A549 (cell line): ENCODE measurements at regions of chr2 and their contacts with region 1.

Region 1: GRCh38 chr2:231612179-231613053 is 19.8 kb downstream of the TEX44 start:
- DNase-seq: peak; percentile 92 to 95
- ATAC-seq: peak; percentile 69 to 84
- H3K4me3 ChIP-seq: peak overlapping the region; percentile 11; the same call in 1 of the 3 replicates
- H3K27ac ChIP-seq: peak overlapping the region; percentile 90 to 95
- H3K4me1 ChIP-seq: peaks cover 35% of the 10 kb centered on the region
- CTCF ChIP-seq: peak; percentile 95
- EP300 ChIP-seq: no peak
- POLR2A ChIP-seq: no peak
- RAD21 ChIP-seq: peak; percentile 94 to 99

Region 2: GRCh38 chr2:231590619-231591018 is 21.8 kb before region 1 on chr2:
- CTCF ChIA-PET with region 1: interaction called, 13 read pairs
- POLR2A ChIA-PET with region 1: no interaction called
- DNase-seq: no peak
- ATAC-seq: 0 out of 6 replicates have a peak, but pooled peaks of 1 of the 2 experiments have one; percentile 36
- H3K4me3 ChIP-seq: no peak overlapping the region
- H3K27ac ChIP-seq: no peak overlapping the region
- H3K4me1 ChIP-seq: no peaks in the 10 kb centered on the region
- CTCF ChIP-seq: no peak
- EP300 ChIP-seq: no peak
- POLR2A ChIP-seq: no peak
- RAD21 ChIP-seq: no peak

Region 3: DNA sequence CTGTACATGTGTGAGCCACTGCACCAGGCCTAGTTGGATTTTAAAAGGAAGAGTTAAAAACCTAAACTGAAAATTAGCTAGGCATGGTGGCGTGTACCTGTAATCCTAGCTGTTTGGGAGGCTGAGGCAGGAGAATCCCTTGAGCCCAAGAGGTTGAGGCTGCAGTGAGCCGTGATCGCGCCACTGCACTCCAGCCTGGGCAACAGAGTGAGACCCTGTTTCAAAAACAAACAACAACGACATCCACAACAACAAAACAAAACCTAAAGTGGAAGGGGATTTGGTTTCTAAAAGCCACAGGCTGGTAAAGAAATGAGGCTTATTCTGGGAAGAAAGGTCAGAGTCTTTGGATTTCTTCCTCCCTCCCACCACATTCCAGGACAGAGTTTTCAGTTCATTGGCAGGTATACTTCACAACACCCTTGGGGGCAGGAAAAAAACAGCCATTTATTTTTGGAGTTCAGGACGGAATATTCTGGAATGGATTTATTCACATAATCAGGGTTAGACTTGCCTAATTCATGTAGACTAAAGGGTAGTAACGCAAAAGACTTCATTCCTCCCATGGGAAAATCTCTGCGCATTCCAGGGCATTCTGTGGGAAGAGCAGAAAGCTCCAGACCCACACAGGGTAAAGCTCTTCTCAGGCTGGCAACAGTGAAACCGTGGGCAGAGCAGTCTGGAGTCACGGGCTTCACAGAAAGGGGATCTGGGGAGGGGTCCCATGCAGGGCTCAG is 15.1 kb after region 1 on chr2:
- CTCF ChIA-PET with region 1: interaction called, 47 read pairs
- POLR2A ChIA-PET with region 1: interaction called, 6 read pairs
- DNase-seq: no peak
- ATAC-seq: no peak
- H3K4me3 ChIP-seq: no peak overlapping the region
- H3K27ac ChIP-seq: 0 out of 6 replicates have a peak overlapping the region, but pooled peaks of 1 of the 2 experiments have one; percentile 18
- H3K4me1 ChIP-seq: peaks cover 9% of the 10 kb centered on the region
- CTCF ChIP-seq: no peak
- EP300 ChIP-seq: no peak
- POLR2A ChIP-seq: no peak
- RAD21 ChIP-seq: no peak

Region 4: GRCh38 chr2:231662028-231662810 is 49.8 kb after region 1 on chr2:
- CTCF ChIA-PET with region 1: interaction called, 4,158 read pairs
- POLR2A ChIA-PET with region 1: interaction called, 25 read pairs
- DNase-seq: peak; percentile 69 to 99
- ATAC-seq: peak; percentile 48 to 72
- H3K4me3 ChIP-seq: peak overlapping the region; percentile 40
- H3K27ac ChIP-seq: peak overlapping the region; percentile 88 to 100
- H3K4me1 ChIP-seq: peaks cover 20% of the 10 kb centered on the region
- CTCF ChIP-seq: no peak; the same call in 2 of the 3 replicates
- EP300 ChIP-seq: no peak
- POLR2A ChIP-seq: peak; percentile 51
- RAD21 ChIP-seq: 0 out of 5 replicates have a peak, but pooled peaks of 1 of the 2 experiments have one; percentile 34

Region 5: GRCh38 chr2:231706731-231707624 is 94.6 kb after region 1 on chr2:
- CTCF ChIA-PET with region 1: interaction called, 4,158 read pairs
- POLR2A ChIA-PET with region 1: interaction called, 41 read pairs
- DNase-seq: peak; percentile 94 to 99
- ATAC-seq: peak; percentile 56 to 74
- H3K4me3 ChIP-seq: peak overlapping the region; percentile 66
- H3K27ac ChIP-seq: peak overlapping the region; percentile 94 to 97
- H3K4me1 ChIP-seq: peaks cover 20% of the 10 kb centered on the region
- CTCF ChIP-seq: peak; percentile 94
- EP300 ChIP-seq: no peak
- POLR2A ChIP-seq: peak; percentile 29; the same call in 1 of the 2 replicates
- RAD21 ChIP-seq: no peak